Common myeloid progenitor, CD34-positive (primary cell): ENCODE measurements at regions of chrX and their contacts with region 1.

Region 1: GRCh38 chrX:30635630-30636029 is 17.6 kb upstream of the GK start:
- DNase-seq: peak in 2 of 3 donors; percentile 42 to 53
- H3K4me3 ChIP-seq: no peak overlapping the region
- H3K27ac ChIP-seq: no peak overlapping the region
- H3K4me1 ChIP-seq: peaks cover 0 to 3% (median 0%) of the 10 kb centered on the region in 4 experiments
- H3K27me3 ChIP-seq: no peaks in the 10 kb centered on the region

Region 2: GRCh38 chrX:30259927-30260326 is 375.7 kb before region 1 on chrX:
- CTCF ChIA-PET with region 1: no interaction called
- POLR2A ChIA-PET with region 1: no interaction called
- DNase-seq: no peak
- H3K4me3 ChIP-seq: no peak overlapping the region
- H3K27ac ChIP-seq: no peak overlapping the region
- H3K4me1 ChIP-seq: no peaks in the 10 kb centered on the region
- H3K27me3 ChIP-seq: no peaks in the 10 kb centered on the region

Region 3: DNA sequence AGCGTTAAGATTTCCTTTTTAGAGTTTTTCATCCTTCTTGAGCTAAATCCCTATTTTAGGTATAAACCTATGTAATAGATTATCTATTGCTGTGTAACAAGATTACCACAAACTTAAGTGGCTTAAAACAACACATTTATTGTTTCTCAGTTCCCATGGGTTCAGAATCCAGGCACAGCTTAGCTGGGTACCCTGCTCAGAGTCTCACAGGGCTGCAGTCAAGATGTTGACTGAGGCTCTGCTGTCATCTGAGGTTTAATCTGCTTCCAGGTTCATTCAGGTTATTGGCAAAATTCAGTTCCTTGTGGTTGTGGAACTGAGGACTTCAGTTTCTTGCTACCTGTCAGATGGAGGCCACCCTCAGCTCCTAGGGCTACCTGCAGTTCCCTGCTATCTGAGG is 78.5 kb after region 1 on chrX:
- CTCF ChIA-PET with region 1: interaction called, 11 read pairs
- POLR2A ChIA-PET with region 1: interaction called, 3 read pairs
- DNase-seq: no peak
- H3K4me3 ChIP-seq: no peak overlapping the region
- H3K27ac ChIP-seq: no peak overlapping the region
- H3K4me1 ChIP-seq: peaks cover 0 to 3% (median 0%) of the 10 kb centered on the region in 4 experiments
- H3K27me3 ChIP-seq: peaks cover 0 to 3% (median 0%) of the 10 kb centered on the region in 5 experiments